ENCODE measurements at regions of chr2 and their contacts with region 1.

Region 1: GRCh38 chr2:61426267-61426897 is 44.5 kb downstream of the USP34 start:
- DNase-seq: peak; percentile 85
- ATAC-seq: peak; percentile 94
- H3K4me3 Mint-ChIP-seq: no peak overlapping the region
- H3K27ac Mint-ChIP-seq: peak overlapping the region; percentile 89
- H3K4me1 Mint-ChIP-seq: peaks cover 61% of the 10 kb centered on the region
- H3K27me3 Mint-ChIP-seq: no peaks in the 10 kb centered on the region
- CTCF ChIP-seq: peak; percentile 75

Region 2: DNA sequence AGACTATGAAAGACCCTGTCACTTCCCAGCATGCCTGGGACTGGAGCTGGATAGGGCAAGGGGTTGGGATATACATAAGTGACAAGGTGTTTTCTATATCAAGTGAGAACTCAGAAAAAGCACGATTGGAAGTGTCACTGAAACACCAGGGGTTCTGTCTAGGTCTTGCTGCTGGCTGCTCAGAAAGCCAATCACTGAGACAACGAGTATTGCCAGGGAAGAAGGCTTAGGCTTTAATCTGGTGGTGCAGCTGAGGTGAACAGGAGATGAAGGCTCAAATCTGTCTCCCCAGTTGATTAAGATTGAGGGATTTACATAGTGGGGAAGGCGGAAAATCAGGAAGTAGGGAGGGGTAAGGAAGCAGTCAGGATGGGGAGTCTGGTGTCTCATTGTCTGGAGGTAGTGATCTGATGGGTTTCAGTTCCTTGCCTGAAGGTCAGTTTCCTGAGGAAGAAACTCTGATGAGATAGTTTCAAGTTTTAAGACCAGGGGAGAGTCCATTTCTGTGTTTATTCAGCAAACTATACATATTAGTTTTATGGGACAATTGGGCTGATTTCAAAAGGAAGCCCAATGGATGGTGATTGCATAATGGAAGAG is 267.9 kb before region 1 on chr2:
- CTCF ChIA-PET with region 1: no interaction called
- POLR2A ChIA-PET with region 1: no interaction called
- intact Hi-C with region 1: no loop called
- DNase-seq: no peak
- ATAC-seq: no peak
- H3K4me3 Mint-ChIP-seq: no peak overlapping the region
- H3K27ac Mint-ChIP-seq: no peak overlapping the region
- H3K4me1 Mint-ChIP-seq: peaks cover 7% of the 10 kb centered on the region
- H3K27me3 Mint-ChIP-seq: no peaks in the 10 kb centered on the region
- CTCF ChIP-seq: no peak

Region 3: GRCh38 chr2:61405813-61406212 is 20.6 kb before region 1 on chr2:
- CTCF ChIA-PET with region 1: interaction called, 12 read pairs
- POLR2A ChIA-PET with region 1: no interaction called
- intact Hi-C with region 1: no loop called
- DNase-seq: no peak
- ATAC-seq: no peak
- H3K4me3 Mint-ChIP-seq: no peak overlapping the region
- H3K27ac Mint-ChIP-seq: no peak overlapping the region
- H3K4me1 Mint-ChIP-seq: peaks cover 6% of the 10 kb centered on the region
- H3K27me3 Mint-ChIP-seq: no peaks in the 10 kb centered on the region
- CTCF ChIP-seq: no peak

Region 4: DNA sequence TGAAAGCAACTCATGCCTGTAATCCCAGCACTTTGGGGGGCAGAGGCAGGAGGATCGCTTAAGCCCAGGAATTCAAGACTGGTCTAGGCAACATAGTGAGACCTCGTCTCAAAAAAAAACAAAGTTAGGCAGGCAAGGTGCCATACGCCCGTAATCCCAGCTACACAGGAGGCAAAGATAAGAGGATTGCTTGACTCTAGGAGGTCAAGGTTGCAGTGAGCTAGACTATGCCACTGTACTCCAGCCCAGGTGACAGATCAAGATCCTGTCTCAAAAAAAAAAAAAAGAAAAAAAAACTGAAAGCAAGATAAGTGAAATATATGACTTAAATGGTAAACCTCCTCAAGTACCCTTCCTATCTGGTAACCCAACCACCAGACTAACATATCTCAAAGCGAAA is 15.3 kb before region 1 on chr2:
- CTCF ChIA-PET with region 1: interaction called, 21 read pairs
- POLR2A ChIA-PET with region 1: no interaction called
- intact Hi-C with region 1: no loop called
- DNase-seq: no peak
- ATAC-seq: no peak
- H3K4me3 Mint-ChIP-seq: no peak overlapping the region
- H3K27ac Mint-ChIP-seq: no peak overlapping the region
- H3K4me1 Mint-ChIP-seq: peaks cover 17% of the 10 kb centered on the region
- H3K27me3 Mint-ChIP-seq: no peaks in the 10 kb centered on the region
- CTCF ChIP-seq: no peak

Region 5: GRCh38 chr2:61439241-61440002 is 13.0 kb after region 1 on chr2:
- CTCF ChIA-PET with region 1: interaction called, 12 read pairs
- POLR2A ChIA-PET with region 1: interaction called, 5 read pairs
- intact Hi-C with region 1: no loop called
- DNase-seq: no peak
- ATAC-seq: no peak
- H3K4me3 Mint-ChIP-seq: no peak overlapping the region
- H3K27ac Mint-ChIP-seq: peak overlapping the region; percentile 27
- H3K4me1 Mint-ChIP-seq: peaks cover 68% of the 10 kb centered on the region
- H3K27me3 Mint-ChIP-seq: no peaks in the 10 kb centered on the region
- CTCF ChIP-seq: no peak

Region 6: DNA sequence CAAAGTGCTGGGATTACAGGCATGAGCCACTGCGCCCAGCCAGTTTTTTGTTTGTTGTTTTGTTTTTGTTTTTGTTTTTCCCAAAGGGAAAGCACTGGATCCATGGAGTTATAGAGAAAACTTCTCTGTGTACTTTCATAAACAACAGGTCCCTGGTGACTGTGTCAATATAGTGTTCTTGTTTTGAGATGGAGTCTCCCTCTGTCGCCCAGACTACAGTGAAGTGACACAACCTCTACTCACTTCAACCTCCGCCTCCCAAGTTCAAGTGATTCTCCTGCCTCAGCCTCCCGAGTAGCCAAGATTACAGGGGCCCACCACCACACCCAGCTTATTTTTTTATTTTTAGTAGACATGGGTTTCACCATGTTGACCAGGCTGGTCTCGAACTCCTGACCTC is 28.0 kb after region 1 on chr2:
- CTCF ChIA-PET with region 1: interaction called, 11 read pairs
- POLR2A ChIA-PET with region 1: no interaction called
- intact Hi-C with region 1: no loop called
- DNase-seq: no peak
- ATAC-seq: no peak
- H3K4me3 Mint-ChIP-seq: no peak overlapping the region
- H3K27ac Mint-ChIP-seq: peak overlapping the region; percentile 15
- H3K4me1 Mint-ChIP-seq: peaks cover 46% of the 10 kb centered on the region
- H3K27me3 Mint-ChIP-seq: no peaks in the 10 kb centered on the region
- CTCF ChIP-seq: no peak

Region 7: GRCh38 chr2:61460163-61460562 is 33.8 kb after region 1 on chr2:
- CTCF ChIA-PET with region 1: interaction called, 11 read pairs
- POLR2A ChIA-PET with region 1: interaction called, 4 read pairs
- intact Hi-C with region 1: no loop called
- DNase-seq: no peak
- ATAC-seq: no peak
- H3K4me3 Mint-ChIP-seq: no peak overlapping the region
- H3K27ac Mint-ChIP-seq: no peak overlapping the region
- H3K4me1 Mint-ChIP-seq: peaks cover 63% of the 10 kb centered on the region
- H3K27me3 Mint-ChIP-seq: no peaks in the 10 kb centered on the region
- CTCF ChIP-seq: no peak

Region 8: GRCh38 chr2:61470965-61471904 is 44.9 kb after region 1 on chr2 and contains the start of gene USP34:
- CTCF ChIA-PET with region 1: interaction called, 10 read pairs
- POLR2A ChIA-PET with region 1: interaction called, 4 read pairs
- intact Hi-C with region 1: loop called (anchors 5 kb)
- DNase-seq: peak; percentile 95
- ATAC-seq: peak; percentile 92
- H3K4me3 Mint-ChIP-seq: peak within 1 kb of the TSS; percentile 89
- H3K27ac Mint-ChIP-seq: peak within 1 kb of the TSS; percentile 95
- H3K4me1 Mint-ChIP-seq: peaks cover 27% of the 10 kb centered on the region
- H3K27me3 Mint-ChIP-seq: no peaks in the 10 kb centered on the region
- CTCF ChIP-seq: no peak
- total RNA-seq, gene USP34: 69.0 to 71.3 TPM

Measured in activated CD8-positive, alpha-beta T cell treated with anti-CD3 and anti-CD28 coated beads for 36 hours (primary cell).